ENCODE measurements at regions of chr13 and their contacts with region 1.

Region 1: DNA sequence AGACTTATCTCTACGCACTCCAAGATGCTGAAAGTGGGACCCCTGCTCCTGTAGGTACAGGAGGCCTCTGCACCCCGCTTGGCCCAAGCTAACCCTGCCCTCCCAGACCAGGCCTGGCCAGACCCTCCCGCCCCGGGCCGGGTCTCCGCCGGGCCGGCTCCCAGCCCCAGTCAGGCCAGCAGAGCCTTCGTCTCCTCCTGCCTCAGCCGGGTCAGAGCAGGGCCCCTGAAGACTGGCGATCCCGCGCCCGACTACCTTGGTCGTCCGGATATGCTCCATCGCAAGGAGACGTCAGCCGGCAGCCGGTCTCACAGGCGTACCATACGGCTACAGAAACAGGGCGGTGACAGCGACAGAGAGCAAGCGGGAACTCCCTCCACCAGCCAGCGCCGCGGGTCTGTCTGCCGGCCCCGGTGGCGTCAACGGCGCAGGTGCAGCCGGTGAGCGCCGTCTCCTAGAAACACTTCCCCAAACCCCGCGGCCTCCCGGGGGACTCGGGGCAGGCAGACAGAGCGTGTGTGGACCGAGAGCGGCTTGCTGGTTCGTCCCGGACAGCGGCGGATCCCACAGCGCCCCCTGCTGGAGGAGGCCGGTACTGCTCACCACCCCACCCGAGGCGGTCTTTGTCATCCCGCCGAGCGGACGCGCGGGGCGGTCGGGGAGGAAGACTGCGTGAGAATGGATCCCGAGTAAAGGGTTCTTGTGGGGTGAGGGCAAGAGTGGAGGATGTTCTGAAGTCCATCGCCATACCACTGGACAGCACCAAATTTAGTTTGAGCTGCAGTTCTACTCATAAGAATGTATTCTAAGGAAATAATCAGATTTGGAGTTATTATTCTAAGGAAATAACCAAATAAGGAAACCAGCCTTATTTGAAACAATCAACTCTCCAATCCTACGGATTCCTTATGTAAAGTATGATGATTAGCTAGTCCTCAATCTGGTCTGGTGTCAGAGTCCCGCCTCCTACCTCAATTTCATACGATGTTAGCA is at the start of gene MTMR6:
- DNase-seq: no peak
- H3K4me3 ChIP-seq: peak within 1 kb of the TSS; percentile 93
- CTCF ChIP-seq: peak; percentile 99

Region 2: GRCh38 chr13:25253687-25254086 is 33.6 kb before region 1 on chr13:
- CTCF ChIA-PET with region 1: interaction called, 12 read pairs
- POLR2A ChIA-PET with region 1: no interaction called
- DNase-seq: no peak
- H3K4me3 ChIP-seq: no peak overlapping the region
- CTCF ChIP-seq: no peak

Region 3: DNA sequence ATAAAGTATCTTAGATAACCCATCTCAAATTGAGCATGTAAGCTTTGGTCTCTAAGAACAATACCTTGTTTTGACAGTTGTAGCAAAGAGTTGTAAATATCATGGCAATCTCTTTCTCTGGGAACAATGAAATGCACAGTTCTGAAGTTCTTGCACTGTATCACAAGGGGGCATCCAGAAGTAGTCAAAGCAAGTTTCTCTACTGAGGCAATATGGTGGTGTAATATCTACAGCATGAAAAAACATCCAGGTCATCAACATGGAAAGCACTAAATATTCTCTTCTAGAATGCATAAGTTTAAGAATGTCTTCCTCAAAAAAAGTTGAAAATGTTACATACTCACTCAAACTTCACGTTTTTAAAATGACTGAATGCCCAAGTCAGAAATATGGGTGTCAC is 19.6 kb before region 1 on chr13:
- CTCF ChIA-PET with region 1: interaction called, 21 read pairs
- POLR2A ChIA-PET with region 1: no interaction called
- DNase-seq: no peak
- H3K4me3 ChIP-seq: no peak overlapping the region
- CTCF ChIP-seq: peak; percentile 13

Region 4: GRCh38 chr13:25301347-25302047 is 14.2 kb after region 1 on chr13 and contains the start of gene NUP58:
- CTCF ChIA-PET with region 1: interaction called, 75 read pairs
- POLR2A ChIA-PET with region 1: interaction called, 9 read pairs
- DNase-seq: peak; percentile 71
- H3K4me3 ChIP-seq: peak within 1 kb of the TSS; percentile 93
- CTCF ChIP-seq: no peak

Region 5: GRCh38 chr13:25406377-25406915 is 119.2 kb after region 1 on chr13:
- CTCF ChIA-PET with region 1: no interaction called
- POLR2A ChIA-PET with region 1: no interaction called
- DNase-seq: no peak
- H3K4me3 ChIP-seq: no peak overlapping the region
- CTCF ChIP-seq: no peak